MCF 10A (cell line): ENCODE measurements at regions of chr11 and their contacts with region 1.

Region 1: GRCh38 chr11:66727282-66727882 is 1.6 kb downstream of the SPTBN2 start:
- DNase-seq: peak; percentile 40
- H3K4me3 Mint-ChIP-seq: peak overlapping the region; percentile 82
- H3K27ac Mint-ChIP-seq: peak overlapping the region; percentile 49
- H3K4me1 Mint-ChIP-seq: peaks cover 18% of the 10 kb centered on the region
- H3K27me3 Mint-ChIP-seq: no peaks in the 10 kb centered on the region
- CTCF ChIP-seq: no peak

Region 2: DNA sequence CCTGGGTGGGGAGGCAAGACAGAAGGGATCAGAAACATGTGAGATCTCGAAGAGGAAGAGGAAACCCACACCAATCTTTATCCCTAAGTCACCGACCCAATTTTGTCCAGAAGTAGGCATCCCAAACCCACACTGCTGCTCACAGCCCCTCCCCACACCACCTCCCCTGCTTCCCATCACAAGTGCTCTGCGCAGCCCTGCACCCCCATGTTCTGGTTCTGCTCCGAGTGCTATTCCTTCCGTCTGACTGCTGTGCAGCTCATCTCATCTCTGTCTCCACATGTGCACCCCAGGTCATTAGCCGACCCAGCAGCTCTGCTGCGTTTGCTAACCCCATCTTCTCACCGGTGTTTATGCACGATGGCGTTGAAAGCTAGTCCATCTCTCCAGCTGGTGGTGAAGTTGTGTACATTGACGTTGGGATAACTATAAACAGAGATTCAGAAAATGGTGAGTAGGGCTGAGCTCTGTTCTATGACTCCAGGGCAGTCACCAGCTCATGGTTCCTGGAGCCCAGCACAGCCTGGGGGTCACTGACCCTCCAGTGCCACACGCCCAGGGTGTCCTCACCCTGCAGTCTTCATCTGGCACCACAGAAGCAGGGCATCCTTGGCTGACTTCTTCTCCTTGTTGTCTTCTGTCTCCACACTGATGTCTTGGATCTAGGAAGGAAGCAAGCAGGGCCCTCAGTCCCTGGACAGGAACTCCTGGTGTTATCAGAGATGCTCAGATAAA is 13.5 kb before region 1 on chr11:
- CTCF ChIA-PET with region 1: interaction called, 4 read pairs
- POLR2A ChIA-PET with region 1: interaction called, 10 read pairs
- intact Hi-C with region 1: no loop called
- DNase-seq: no peak
- H3K4me3 Mint-ChIP-seq: no peak overlapping the region
- H3K27ac Mint-ChIP-seq: no peak overlapping the region
- H3K4me1 Mint-ChIP-seq: no peaks in the 10 kb centered on the region
- H3K27me3 Mint-ChIP-seq: no peaks in the 10 kb centered on the region
- CTCF ChIP-seq: no peak

Region 3: DNA sequence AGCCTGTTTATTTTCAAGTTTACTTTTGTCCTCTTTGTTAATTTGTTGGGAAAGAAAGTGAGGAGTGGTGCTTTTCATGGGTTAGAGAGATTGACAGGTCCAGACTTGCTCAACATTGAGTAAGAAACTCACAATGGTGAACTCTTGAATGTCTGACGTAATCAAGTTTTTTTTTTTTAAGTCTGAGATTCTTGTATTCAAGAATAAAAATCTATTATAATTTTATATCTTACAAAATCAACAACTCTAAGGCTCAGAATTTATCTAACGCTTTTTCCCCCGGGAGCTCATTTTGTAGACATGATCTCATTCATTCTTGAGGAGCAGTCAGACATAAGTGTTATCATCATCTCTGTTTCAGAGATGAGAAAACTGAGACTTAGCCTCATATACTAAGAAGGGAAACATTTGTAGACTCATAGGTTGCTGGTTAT is 40.7 kb after region 1 on chr11:
- CTCF ChIA-PET with region 1: interaction called, 10 read pairs
- POLR2A ChIA-PET with region 1: interaction called, 63 read pairs
- intact Hi-C with region 1: no loop called
- DNase-seq: peak; percentile 92
- H3K4me3 Mint-ChIP-seq: peak overlapping the region; percentile 53
- H3K27ac Mint-ChIP-seq: peak overlapping the region; percentile 90
- H3K4me1 Mint-ChIP-seq: peaks cover 38% of the 10 kb centered on the region
- H3K27me3 Mint-ChIP-seq: no peaks in the 10 kb centered on the region
- CTCF ChIP-seq: no peak

Region 4: GRCh38 chr11:66784575-66784974 is 57.2 kb after region 1 on chr11:
- CTCF ChIA-PET with region 1: no interaction called
- POLR2A ChIA-PET with region 1: no interaction called
- intact Hi-C with region 1: no loop called
- DNase-seq: no peak
- H3K4me3 Mint-ChIP-seq: no peak overlapping the region
- H3K27ac Mint-ChIP-seq: no peak overlapping the region
- H3K4me1 Mint-ChIP-seq: no peaks in the 10 kb centered on the region
- H3K27me3 Mint-ChIP-seq: no peaks in the 10 kb centered on the region
- CTCF ChIP-seq: no peak